ENCODE measurements at regions of chr5 and their contacts with region 1.

Region 1: DNA sequence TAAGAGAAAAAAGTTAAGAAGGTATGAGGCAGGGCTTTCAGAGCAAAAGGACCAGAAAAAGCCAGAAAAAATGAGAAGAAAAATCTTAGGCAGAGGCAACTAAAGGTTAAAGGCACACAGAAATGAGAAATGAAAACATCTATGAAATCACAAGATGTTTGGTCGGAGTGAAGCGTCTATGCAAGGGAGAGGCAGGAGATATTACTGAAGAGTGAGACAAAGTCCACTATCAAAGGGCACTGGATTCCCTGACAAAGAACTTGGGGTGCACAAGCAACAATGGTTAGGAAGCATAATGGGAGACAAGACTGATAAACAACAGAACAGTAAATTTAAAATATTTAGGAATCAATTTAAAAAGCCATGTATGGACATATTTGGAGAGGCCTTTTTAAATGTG is 16.9 kb downstream of the PANK3 start:
- DNase-seq: no peak
- H3K4me3 ChIP-seq: no peak overlapping the region
- H3K27ac ChIP-seq: no peak overlapping the region
- H3K4me1 ChIP-seq: peaks cover 0 to 10% (median 2%) of the 10 kb centered on the region in 6 donors
- H3K27me3 ChIP-seq: no peaks in the 10 kb centered on the region
- CTCF ChIP-seq: no peak
- POLR2A ChIP-seq: no peak

Region 2: DNA sequence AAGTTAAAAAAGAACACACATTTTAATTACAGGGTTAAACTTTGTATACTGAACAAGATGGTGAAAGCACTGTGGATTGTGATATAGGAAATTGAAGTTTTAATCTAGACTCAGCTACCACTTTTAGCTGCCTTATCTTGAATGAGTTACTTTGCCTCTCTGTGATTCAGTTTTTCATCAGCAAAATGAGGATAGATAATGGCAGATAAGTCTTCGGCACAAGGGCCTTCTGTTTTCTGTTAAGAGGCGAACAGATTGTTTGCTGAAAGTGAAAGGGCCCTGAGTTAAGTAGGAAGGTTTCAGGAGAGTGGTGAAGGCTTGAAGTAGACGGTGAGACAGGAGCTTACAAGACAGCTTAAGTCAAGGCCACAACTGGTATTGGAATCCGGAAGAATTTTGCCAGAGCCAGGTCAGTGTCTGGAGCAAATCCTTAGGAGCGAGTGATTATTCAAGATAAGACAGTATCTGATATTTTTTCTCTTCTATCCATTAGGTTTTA is 68.2 kb before region 1 on chr5:
- intact Hi-C with region 1: loop called (anchors 10 kb)
- DNase-seq: no peak
- H3K4me3 ChIP-seq: no peak overlapping the region
- H3K27ac ChIP-seq: no peak overlapping the region
- H3K4me1 ChIP-seq: peaks cover 0 to 21% (median 0%) of the 10 kb centered on the region in 6 donors
- H3K27me3 ChIP-seq: no peaks in the 10 kb centered on the region
- CTCF ChIP-seq: no peak
- POLR2A ChIP-seq: no peak

Measured in spleen (tissue), 13 donors.